H1 (cell line): ENCODE measurements at regions of chr14 and their contacts with region 1.

Region 1: GRCh38 chr14:61025251-61026223 is 44.5 kb downstream of the SLC38A6 start:
- DNase-seq: no peak
- H3K4me3 ChIP-seq: no peak overlapping the region
- H3K27ac ChIP-seq: no peak overlapping the region
- H3K4me1 ChIP-seq: no peaks in the 10 kb centered on the region
- H3K27me3 ChIP-seq: no peaks in the 10 kb centered on the region
- CTCF ChIP-seq: peak in 2 of 3 experiments; percentile 70 to 82; a peak in 3 of 4 replicates
- EP300 ChIP-seq: no peak
- POLR2A ChIP-seq: no peak
- RAD21 ChIP-seq: peak; percentile 89

Region 2: DNA sequence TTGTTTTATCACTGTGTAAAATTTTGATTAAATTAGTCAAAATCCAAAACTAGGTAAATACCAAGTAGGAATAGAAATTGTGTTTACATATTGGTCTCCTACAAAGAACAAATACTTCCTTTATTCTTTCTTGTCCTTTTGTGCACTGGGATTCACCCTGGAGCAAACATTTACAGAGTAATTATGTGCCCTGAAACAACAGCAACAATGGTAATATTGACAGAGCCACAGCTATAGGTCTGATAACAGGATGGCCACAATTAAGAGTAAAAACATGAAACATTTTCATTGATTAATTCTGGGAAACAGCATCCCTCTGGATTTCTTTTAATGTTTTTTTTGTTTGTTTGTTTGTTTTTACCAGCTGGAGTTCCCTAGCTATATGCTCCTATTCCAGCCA is 16.7 kb after region 1 on chr14:
- CTCF ChIA-PET with region 1: interaction called, 10 read pairs
- POLR2A ChIA-PET with region 1: no interaction called
- DNase-seq: no peak
- H3K4me3 ChIP-seq: no peak overlapping the region
- H3K27ac ChIP-seq: no peak overlapping the region
- H3K4me1 ChIP-seq: peaks cover 0 to 3% (median 0%) of the 10 kb centered on the region in 4 experiments; a peak in 2 of 7 replicates
- H3K27me3 ChIP-seq: no peaks in the 10 kb centered on the region
- CTCF ChIP-seq: no peak
- EP300 ChIP-seq: no peak
- POLR2A ChIP-seq: no peak
- RAD21 ChIP-seq: no peak

Region 3: DNA sequence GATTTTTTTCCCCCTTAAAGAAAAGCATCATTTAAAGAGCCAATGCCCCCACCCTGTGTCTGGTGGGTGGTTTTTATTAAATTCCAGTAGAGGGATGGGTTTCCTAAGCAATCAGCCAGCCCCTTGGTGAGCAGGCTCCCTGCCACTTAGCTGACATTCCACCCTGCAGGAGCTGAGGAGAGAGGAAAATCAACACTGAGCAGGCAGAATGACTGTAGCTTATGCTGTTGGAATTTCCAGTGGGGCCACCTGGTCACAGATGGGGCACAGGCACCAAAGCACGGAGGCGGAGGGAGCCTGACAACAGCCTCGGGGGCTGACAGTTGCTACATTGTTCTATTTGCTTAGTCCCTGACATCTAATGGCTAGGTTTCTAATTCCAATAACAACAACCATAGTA is 127.9 kb after region 1 on chr14:
- CTCF ChIA-PET with region 1: no interaction called
- POLR2A ChIA-PET with region 1: no interaction called
- DNase-seq: no peak
- H3K4me3 ChIP-seq: no peak overlapping the region
- H3K27ac ChIP-seq: no peak overlapping the region
- H3K4me1 ChIP-seq: peaks cover 4 to 18% (median 8%) of the 10 kb centered on the region in 4 experiments
- H3K27me3 ChIP-seq: no peaks in the 10 kb centered on the region
- CTCF ChIP-seq: no peak
- EP300 ChIP-seq: no peak
- POLR2A ChIP-seq: no peak
- RAD21 ChIP-seq: no peak; a peak in 1 of 4 replicates